ENCODE measurements at regions of chr1 and their contacts with region 1.

Region 1: DNA sequence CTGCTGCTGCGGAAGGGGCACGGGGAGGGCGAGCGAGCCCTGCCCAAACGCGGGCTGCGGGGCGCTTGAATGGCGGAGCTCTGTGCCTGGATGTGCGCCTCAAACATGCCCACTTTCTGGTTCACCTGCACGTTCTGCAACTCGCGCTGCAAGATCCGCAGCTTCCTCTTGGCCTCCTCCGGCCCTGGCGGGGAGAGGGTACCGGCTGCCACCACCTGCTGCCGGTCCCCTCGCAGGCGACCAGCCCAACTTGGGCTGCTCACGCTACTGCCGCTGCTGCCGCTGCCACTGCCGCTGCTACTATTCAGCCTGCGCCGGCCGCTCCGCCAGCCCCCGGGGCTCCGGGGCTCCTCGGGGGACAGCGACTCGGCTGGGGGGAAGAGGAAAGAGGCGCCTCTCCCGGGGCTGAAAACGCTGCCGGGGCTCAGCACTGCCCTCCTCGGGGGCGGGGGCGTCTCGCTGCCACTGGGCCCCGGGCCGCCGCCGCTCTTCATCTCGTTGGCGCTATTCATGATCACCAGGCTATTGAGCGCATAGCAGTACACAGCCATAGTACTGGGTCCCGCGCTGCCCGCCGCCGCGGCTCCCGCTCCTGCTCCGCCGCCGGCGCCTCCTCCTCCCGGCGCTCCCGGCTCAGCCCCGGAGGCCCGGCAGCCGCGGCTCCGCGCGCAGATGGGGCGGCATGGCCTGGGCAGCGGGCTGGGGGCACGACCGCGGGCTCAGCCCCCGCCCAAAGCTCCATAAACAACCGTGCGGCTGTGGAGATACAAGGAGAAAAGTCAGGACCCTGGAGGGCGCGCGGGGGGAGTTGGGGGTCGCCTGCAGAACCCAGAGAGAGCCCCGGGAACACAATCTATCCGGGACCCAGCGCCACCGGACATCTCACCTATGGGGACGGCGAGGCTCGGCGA is 1.9 kb downstream of the ITPKB start:
- DNase-seq: peak; percentile 83
- H3K4me3 ChIP-seq: peak overlapping the region; percentile 83
- H3K27ac ChIP-seq: peak overlapping the region; percentile 83
- H3K4me1 ChIP-seq: peaks cover 75% of the 10 kb centered on the region
- CTCF ChIP-seq: peak; percentile 56

Region 2: GRCh38 chr1:226656601-226657277 is 80.4 kb before region 1 on chr1:
- CTCF ChIA-PET with region 1: interaction called, 4 read pairs
- POLR2A ChIA-PET with region 1: interaction called, 18 read pairs
- intact Hi-C with region 1: loop called (anchors 2 kb)
- DNase-seq: peak; percentile 50
- H3K4me3 ChIP-seq: peak overlapping the region; percentile 68
- H3K27ac ChIP-seq: no peak overlapping the region
- H3K4me1 ChIP-seq: no peaks in the 10 kb centered on the region
- CTCF ChIP-seq: no peak

Region 3: DNA sequence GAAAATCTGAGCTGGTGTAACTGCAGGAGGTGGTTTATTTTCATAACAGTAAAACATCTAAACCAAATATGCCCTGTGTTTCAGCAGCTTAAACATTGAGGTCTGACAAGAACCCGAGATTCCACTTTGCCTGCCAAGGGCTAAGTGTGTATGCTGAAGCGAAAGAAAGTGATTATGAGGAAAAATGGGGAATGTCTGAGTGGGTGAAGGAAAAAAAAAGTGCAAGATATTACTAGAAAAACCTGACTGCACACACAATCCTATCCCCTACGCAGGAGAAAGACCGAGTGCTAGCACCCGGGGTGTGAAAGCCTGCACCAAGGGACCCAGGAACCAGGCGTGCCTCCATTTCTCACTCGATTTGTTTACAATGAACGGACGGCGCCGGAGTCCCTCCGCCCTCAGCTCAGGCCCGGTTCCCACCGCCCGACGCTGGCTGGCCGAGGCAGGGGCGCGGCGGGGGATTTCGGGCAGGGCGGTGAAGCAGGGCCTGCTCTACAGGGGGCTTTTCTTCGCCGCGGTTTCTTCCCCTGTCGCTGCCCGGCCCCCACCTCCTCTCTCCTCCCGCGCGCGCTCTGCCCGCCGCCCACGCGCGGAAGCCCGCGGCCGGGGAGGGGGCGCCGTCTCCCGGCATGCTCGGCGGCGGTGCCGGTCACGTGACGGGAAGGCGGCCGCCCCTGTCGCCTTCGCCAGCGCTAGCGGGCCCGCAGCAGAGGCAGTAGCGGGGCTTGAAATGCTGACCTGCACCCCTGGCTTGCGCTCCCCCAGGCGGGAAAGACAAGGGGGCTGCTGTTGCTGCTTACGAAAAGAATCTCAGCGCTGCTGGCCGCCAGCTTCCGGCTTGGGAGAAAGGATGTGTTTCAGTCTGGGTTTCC is 34.0 kb before region 1 on chr1:
- CTCF ChIA-PET with region 1: no interaction called
- POLR2A ChIA-PET with region 1: interaction called, 4 read pairs
- intact Hi-C with region 1: loop called (anchors 5 kb)
- DNase-seq: peak; percentile 73
- H3K4me3 ChIP-seq: peak overlapping the region; percentile 70
- H3K27ac ChIP-seq: peak overlapping the region; percentile 48
- H3K4me1 ChIP-seq: peaks cover 53% of the 10 kb centered on the region
- CTCF ChIP-seq: no peak

Region 4: DNA sequence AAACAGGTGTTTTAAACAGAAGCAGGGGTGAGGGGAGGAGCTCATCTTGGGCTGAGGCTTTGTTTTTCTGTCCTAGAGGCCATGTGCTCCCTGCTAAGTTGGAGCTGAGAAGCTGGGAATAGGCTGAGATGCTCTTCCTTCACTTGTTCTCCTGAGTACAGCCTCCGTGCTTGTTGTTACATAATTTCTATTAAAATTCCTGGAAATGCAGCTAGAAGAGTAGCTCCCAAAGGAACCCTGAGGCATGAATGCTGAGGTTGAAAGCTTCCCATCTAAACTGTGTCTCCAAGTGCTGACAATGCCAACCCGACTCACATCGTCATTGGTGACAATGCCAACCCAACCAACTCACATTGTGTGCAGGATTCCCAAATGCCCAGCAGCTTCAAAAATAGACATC is 14.5 kb after region 1 on chr1:
- CTCF ChIA-PET with region 1: interaction called, 3 read pairs
- POLR2A ChIA-PET with region 1: interaction called, 14 read pairs
- intact Hi-C with region 1: no loop called
- DNase-seq: peak; percentile 50
- H3K4me3 ChIP-seq: no peak overlapping the region
- H3K27ac ChIP-seq: no peak overlapping the region
- H3K4me1 ChIP-seq: peaks cover 44% of the 10 kb centered on the region
- CTCF ChIP-seq: no peak

Region 5: GRCh38 chr1:226827968-226828513 is 90.9 kb after region 1 on chr1:
- CTCF ChIA-PET with region 1: interaction called, 3 read pairs
- POLR2A ChIA-PET with region 1: interaction called, 4 read pairs
- intact Hi-C with region 1: loop called (anchors 1 kb)
- DNase-seq: peak; percentile 97
- H3K4me3 ChIP-seq: peak overlapping the region; percentile 42
- H3K27ac ChIP-seq: peak overlapping the region; percentile 58
- H3K4me1 ChIP-seq: peaks cover 43% of the 10 kb centered on the region
- CTCF ChIP-seq: peak; percentile 95